Lower leg skin (tissue), 4 donors: ENCODE measurements at regions of chr9 and their contacts with region 1.

Region 1: GRCh38 chr9:87763286-87763685 is 37.4 kb downstream of the CTSL start:
- DNase-seq: no peak
- H3K4me3 ChIP-seq: no peak overlapping the region
- CTCF ChIP-seq: no peak
- POLR2A ChIP-seq: no peak

Region 2: DNA sequence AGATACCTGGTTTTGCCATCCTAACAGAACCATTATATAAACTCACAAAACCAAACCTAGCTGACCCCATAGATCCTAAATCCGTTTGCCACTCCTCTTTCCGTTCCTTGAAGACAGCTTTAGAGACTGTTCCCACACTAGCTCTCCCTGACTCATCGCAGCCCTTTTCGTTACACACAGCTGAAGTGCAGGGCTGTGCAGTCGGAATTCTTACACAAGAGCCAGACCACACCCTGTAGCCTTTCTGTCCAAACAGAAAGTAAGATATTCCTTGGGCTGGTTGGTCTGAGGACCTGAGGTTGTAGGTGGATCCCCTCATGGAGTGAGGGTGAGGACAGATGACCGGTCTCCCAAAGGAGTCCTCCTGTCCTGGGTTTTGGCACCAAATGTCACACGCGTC is 1879.0 kb before region 1 on chr9:
- intact Hi-C with region 1: loop called (anchors 5 kb)
- DNase-seq: no peak
- H3K4me3 ChIP-seq: no peak overlapping the region
- CTCF ChIP-seq: no peak
- POLR2A ChIP-seq: no peak

Region 3: DNA sequence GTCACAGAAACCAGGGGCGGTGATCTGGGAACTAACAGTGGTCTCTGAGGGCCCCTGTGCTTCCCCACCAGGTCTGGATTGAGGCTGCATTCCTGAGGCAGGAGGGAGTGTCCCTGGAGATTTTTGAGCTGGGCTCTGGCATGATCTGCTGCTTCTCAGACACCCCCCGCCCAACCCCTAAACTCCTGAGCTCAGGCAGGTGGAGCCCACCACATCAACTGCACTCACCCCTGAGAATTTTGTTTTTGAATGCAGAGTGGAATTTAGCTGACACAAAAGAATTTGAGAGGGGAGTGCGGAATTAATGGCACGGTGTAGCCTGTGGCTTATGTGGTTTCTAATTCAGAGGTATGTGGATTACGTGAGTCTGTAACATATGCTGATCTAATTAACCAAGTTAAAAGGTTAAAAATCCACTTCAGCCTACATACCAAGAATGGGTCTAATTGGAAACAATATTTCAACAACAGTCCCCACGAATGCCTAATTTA is 61.3 kb before region 1 on chr9:
- intact Hi-C with region 1: no loop called
- DNase-seq: no peak
- H3K4me3 ChIP-seq: no peak overlapping the region
- CTCF ChIP-seq: no peak
- POLR2A ChIP-seq: no peak

Region 4: GRCh38 chr9:87824216-87824875 is 61.1 kb after region 1 on chr9:
- intact Hi-C with region 1: no loop called
- DNase-seq: no peak
- H3K4me3 ChIP-seq: no peak overlapping the region
- CTCF ChIP-seq: no peak
- POLR2A ChIP-seq: no peak